Left colon (tissue), 2 donors: ENCODE measurements at regions of chr18 and their contacts with region 1.

Region 1: GRCh38 chr18:1976484-1976883 is 594.8 kb downstream of the METTL4 start:
- DNase-seq: no peak
- ATAC-seq: no peak

Region 2: DNA sequence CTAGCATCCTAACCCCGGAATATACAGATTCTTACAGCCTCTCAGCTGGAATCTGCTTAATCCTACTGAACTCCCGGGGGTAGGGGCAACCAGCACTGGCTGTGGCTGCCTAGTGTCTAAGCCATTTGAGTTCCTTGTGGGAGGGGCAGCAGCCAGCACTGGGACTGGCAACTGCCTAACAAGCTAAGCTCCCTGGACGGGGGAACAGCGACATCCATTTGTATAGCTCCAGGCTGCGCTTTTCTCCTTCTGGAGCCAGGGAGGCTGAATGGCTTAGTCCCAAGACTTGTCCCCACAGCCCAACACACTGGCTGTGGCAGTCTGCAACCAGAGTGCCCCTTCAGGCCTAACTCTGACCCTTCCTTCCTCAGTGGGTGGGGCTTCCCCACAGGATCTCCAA is 192.4 kb before region 1 on chr18:
- intact Hi-C with region 1: no loop called
- DNase-seq: no peak
- ATAC-seq: no peak

Region 3: GRCh38 chr18:1914490-1914889 is 62.0 kb before region 1 on chr18:
- intact Hi-C with region 1: no loop called
- DNase-seq: no peak
- ATAC-seq: no peak

Region 4: DNA sequence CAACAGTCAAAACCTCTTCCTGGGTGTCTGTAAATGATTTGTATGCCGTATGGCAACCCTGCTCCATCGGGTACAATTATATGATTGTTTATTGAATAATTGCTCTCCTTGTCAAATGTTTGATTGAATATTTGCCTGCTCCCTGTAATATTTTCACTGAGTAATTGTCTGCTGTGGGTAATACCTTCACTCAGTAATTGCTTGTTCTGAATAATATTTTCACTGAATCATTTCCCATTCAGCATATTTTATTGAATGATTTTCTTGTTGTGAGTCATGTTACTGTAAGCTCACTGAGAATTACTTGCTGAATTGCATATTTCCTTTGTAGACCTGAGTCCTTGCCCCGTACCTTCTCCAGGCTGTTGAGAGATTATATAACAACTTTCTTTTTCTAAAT is 59.6 kb after region 1 on chr18:
- intact Hi-C with region 1: loop called in 1 of 2 experiments (anchors 10 kb)
- DNase-seq: no peak
- ATAC-seq: no peak

Region 5: GRCh38 chr18:2121221-2121620 is 144.7 kb after region 1 on chr18:
- intact Hi-C with region 1: no loop called
- DNase-seq: no peak
- ATAC-seq: no peak